ENCODE measurements at regions of chr3 and their contacts with region 1.

Region 1: GRCh38 chr3:110314512-110315114 is 757.0 kb upstream of the NECTIN3 start:
- DNase-seq: peak; percentile 37
- H3K4me3 ChIP-seq: no peak overlapping the region
- H3K27ac ChIP-seq: no peak overlapping the region
- H3K4me1 ChIP-seq: peaks cover 0 to 14% of the 10 kb centered on the region in 2 experiments; a peak in 2 of 4 replicates
- H3K27me3 ChIP-seq: no peaks in the 10 kb centered on the region
- CTCF ChIP-seq: peak; percentile 70
- EP300 ChIP-seq: no peak
- RAD21 ChIP-seq: peak; percentile 70

Region 2: DNA sequence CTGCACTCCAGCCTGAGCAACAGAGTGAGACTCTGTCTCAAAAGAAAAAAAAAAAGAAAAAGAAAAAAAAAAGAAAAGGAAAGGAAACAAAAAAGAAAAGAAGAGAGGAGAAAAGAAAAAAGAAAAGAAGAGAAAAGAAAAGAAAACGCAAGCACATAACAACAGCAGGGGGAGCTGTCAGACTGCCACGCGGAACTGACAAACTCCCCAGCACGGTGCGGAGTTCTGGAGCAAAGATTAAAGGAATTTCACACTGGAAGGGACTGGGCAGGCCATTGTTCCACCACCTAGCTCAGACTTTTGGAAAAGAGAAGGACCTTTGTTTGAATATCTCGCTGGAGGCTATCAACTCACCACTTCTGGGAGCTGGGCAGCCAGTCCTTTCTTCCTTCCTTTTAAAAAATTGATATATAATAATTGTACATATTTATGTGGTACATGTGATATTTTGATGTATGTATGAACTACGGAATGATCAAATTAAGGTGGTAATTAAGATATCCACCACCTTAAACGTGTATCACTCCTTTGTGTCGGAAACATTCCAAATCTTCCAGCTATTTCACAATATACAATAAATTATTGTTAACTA is 1038.8 kb before region 1 on chr3:
- CTCF ChIA-PET with region 1: interaction called, 17 read pairs
- POLR2A ChIA-PET with region 1: no interaction called
- DNase-seq: peak; percentile 38
- H3K4me3 ChIP-seq: 0 out of 4 replicates have a peak overlapping the region, but pooled peaks of 1 of the 2 experiments have one; percentile 27
- H3K27ac ChIP-seq: no peak overlapping the region
- H3K4me1 ChIP-seq: no peaks in the 10 kb centered on the region
- H3K27me3 ChIP-seq: no peaks in the 10 kb centered on the region
- CTCF ChIP-seq: peak; percentile 77
- EP300 ChIP-seq: no peak
- RAD21 ChIP-seq: peak; percentile 74

Region 3: DNA sequence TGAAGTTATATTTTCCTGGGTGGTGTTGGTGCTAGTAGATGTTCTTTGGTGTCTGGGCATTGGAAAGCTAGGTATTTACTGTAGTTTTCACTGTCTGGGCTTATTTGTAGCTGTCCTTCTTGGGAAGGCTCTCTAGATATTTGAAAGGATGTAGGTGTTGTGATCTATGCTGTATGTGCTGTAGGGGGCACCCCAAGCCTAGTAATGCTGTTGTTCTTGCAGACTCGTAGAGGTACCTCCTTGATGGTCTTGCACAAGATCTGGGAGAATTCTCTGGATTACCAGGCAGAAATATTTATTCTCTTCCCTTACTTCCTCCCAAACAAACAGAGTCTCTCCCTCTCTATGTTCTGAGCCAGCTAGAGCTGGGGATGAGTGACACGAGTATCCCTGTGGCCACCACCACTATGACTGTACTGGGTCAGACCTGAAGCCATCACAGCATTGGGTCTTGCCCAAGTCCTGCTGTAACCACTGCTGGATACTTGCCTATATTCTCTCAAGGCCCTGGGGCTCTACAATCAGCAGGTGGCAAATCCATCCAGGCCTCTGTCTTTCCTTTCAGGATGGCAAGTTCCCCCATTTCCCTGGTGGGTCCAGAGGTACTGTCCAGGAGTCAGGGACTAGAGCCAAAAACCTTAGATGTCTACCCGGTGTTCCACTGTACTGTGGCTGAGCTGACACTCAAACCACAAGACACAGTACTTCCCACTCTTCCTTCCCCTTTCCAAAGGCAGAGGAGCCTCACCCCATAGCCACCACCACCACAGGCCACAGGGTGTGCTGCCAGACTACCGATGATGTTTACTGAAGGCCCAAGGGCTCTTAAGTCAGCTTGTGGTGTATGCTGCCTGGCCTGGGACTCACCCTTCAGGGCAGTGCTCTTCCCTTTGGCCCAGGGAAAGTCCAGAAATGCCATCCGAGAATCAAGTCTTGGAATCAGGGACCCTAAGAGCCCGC is 782.1 kb before region 1 on chr3:
- CTCF ChIA-PET with region 1: interaction called, 29 read pairs
- POLR2A ChIA-PET with region 1: no interaction called
- DNase-seq: peak; percentile 27
- H3K4me3 ChIP-seq: no peak overlapping the region
- H3K27ac ChIP-seq: no peak overlapping the region
- H3K4me1 ChIP-seq: no peaks in the 10 kb centered on the region; a peak in 1 of 4 replicates
- H3K27me3 ChIP-seq: no peaks in the 10 kb centered on the region
- CTCF ChIP-seq: peak; percentile 77
- EP300 ChIP-seq: no peak
- RAD21 ChIP-seq: peak; percentile 90

Region 4: DNA sequence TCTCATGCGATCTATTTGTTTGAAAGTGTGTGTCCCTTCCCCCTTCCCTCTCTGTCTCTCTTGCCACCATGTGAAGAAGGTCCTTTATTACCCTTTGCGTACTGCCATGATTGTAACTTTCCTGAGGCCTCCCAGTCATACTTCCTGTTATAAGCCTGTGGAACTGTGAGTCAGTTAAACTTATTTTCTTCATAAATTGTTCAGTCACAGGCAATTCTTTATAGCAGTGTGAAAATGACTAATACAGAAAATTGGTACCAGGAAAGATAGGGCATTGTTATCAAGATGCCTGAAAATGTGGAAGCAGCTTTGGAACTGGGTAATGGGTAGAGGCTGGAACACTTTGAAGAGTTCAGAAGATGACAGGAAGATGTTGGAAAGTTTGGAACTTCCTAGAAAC is 13.3 kb after region 1 on chr3:
- CTCF ChIA-PET with region 1: interaction called, 24 read pairs
- POLR2A ChIA-PET with region 1: no interaction called
- DNase-seq: no peak
- H3K4me3 ChIP-seq: no peak overlapping the region
- H3K27ac ChIP-seq: no peak overlapping the region
- H3K4me1 ChIP-seq: no peaks in the 10 kb centered on the region
- H3K27me3 ChIP-seq: no peaks in the 10 kb centered on the region
- CTCF ChIP-seq: no peak
- EP300 ChIP-seq: no peak
- RAD21 ChIP-seq: no peak

Region 5: DNA sequence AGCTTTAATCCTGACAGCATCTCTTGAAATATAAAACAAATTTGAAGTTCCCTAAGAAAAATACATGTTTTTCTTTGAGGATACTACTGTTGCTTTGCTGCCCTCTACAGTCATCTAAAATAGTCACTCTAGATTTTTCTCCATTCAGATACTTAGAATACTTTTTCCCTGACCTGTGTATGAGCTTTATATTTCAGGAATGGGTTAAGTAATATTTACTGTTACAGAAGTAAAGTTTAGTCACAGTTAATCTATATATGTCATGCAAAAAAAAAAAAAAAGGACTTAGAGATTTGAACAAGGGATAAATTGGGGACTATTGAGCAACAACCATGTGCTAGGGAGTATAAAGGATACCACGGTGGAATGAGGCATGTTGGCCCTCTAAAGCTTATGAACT is 765.8 kb after region 1 on chr3:
- CTCF ChIA-PET with region 1: interaction called, 19 read pairs
- POLR2A ChIA-PET with region 1: no interaction called
- DNase-seq: peak; percentile 30
- H3K4me3 ChIP-seq: peak overlapping the region in 1 of 2 experiments; percentile 12; a peak in 1 of 4 replicates
- H3K27ac ChIP-seq: peak overlapping the region in 1 of 2 experiments; percentile 33; a peak in 1 of 4 replicates
- H3K4me1 ChIP-seq: peaks cover 0 to 12% of the 10 kb centered on the region in 2 experiments; a peak in 2 of 4 replicates
- H3K27me3 ChIP-seq: no peaks in the 10 kb centered on the region
- CTCF ChIP-seq: peak; percentile 74
- EP300 ChIP-seq: no peak
- RAD21 ChIP-seq: peak; percentile 72

Measured in SK-N-SH (cell line).